A673 (cell line): ENCODE measurements at regions of chr12 and their contacts with region 1.

Region 1: GRCh38 chr12:79373896-79374499 is 316.8 kb downstream of the PAWR start:
- DNase-seq: peak; percentile 71
- H3K4me3 ChIP-seq: no peak overlapping the region
- H3K27ac ChIP-seq: no peak overlapping the region
- H3K4me1 ChIP-seq: peaks cover 36% of the 10 kb centered on the region
- H3K27me3 ChIP-seq: no peaks in the 10 kb centered on the region
- CTCF ChIP-seq: peak; percentile 93

Region 2: DNA sequence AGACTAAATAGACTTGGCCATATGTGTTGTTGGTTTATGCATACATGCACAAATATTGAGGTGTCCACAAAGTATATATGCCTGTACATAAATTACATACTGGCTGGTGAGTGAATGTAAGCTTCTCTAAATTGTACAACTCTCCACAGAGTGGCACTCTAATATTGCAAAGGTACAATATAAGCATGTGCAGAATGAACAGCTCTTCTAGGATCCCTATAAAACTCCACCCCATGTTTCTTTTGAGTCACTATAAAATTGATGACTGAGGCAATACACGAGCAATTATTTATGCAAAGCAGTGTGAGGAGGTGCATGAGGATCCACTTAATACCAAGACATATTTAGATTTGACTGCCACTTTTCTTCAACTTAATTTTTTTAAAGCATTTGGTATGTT is 1371.1 kb before region 1 on chr12:
- CTCF ChIA-PET with region 1: no interaction called
- POLR2A ChIA-PET with region 1: no interaction called
- intact Hi-C with region 1: loop called (anchors 10 kb)
- DNase-seq: peak; percentile 61
- H3K4me3 ChIP-seq: no peak overlapping the region
- H3K27ac ChIP-seq: no peak overlapping the region
- H3K4me1 ChIP-seq: no peaks in the 10 kb centered on the region
- H3K27me3 ChIP-seq: no peaks in the 10 kb centered on the region
- CTCF ChIP-seq: peak; percentile 51

Region 3: GRCh38 chr12:78392918-78393317 is 981.1 kb before region 1 on chr12:
- CTCF ChIA-PET with region 1: no interaction called
- POLR2A ChIA-PET with region 1: no interaction called
- intact Hi-C with region 1: loop called (anchors 5 kb)
- DNase-seq: peak; percentile 77
- H3K4me3 ChIP-seq: no peak overlapping the region
- H3K27ac ChIP-seq: no peak overlapping the region
- H3K4me1 ChIP-seq: peaks cover 8% of the 10 kb centered on the region
- H3K27me3 ChIP-seq: no peaks in the 10 kb centered on the region
- CTCF ChIP-seq: peak; percentile 57

Region 4: DNA sequence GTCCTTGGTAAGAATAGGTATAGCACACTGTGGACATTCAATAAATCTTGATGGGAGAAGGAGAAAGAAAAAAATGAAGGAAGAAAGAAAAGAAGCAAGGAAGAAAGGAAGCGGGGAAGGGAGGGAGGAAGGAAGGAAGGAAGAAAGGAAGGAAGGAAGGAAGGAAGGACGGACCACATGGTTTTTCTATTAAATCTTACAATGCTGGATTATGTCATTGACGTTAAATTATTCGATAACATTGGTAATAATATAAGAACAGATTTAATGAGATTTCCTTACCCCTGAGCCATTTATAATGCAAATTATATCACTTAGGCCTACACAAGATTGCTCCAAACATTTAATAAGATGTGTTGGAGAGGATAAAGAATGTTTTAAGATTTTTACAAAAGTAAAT is 634.3 kb before region 1 on chr12:
- CTCF ChIA-PET with region 1: no interaction called
- POLR2A ChIA-PET with region 1: no interaction called
- intact Hi-C with region 1: loop called (anchors 5 kb)
- DNase-seq: peak; percentile 89
- H3K4me3 ChIP-seq: peak overlapping the region; percentile 5
- H3K27ac ChIP-seq: peak overlapping the region; percentile 95
- H3K4me1 ChIP-seq: peaks cover 59% of the 10 kb centered on the region
- H3K27me3 ChIP-seq: no peaks in the 10 kb centered on the region
- CTCF ChIP-seq: no peak

Region 5: GRCh38 chr12:79033788-79034187 is 340.2 kb before region 1 on chr12:
- CTCF ChIA-PET with region 1: no interaction called
- POLR2A ChIA-PET with region 1: no interaction called
- intact Hi-C with region 1: loop called (anchors 10 kb)
- DNase-seq: no peak
- H3K4me3 ChIP-seq: no peak overlapping the region
- H3K27ac ChIP-seq: peak overlapping the region; percentile 9
- H3K4me1 ChIP-seq: peaks cover 46% of the 10 kb centered on the region
- H3K27me3 ChIP-seq: no peaks in the 10 kb centered on the region
- CTCF ChIP-seq: no peak

Region 6: GRCh38 chr12:79187032-79187431 is 187.0 kb before region 1 on chr12:
- CTCF ChIA-PET with region 1: no interaction called
- POLR2A ChIA-PET with region 1: no interaction called
- intact Hi-C with region 1: loop called (anchors 5 kb)
- DNase-seq: peak; percentile 44
- H3K4me3 ChIP-seq: no peak overlapping the region
- H3K27ac ChIP-seq: no peak overlapping the region
- H3K4me1 ChIP-seq: peaks cover 67% of the 10 kb centered on the region
- H3K27me3 ChIP-seq: no peaks in the 10 kb centered on the region
- CTCF ChIP-seq: no peak